H1 (cell line): ENCODE measurements at regions of chr3 and their contacts with region 1.

Region 1: GRCh38 chr3:49906004-49906743 is 2.5 kb upstream of the MST1R start:
- DNase-seq: peak in 1 of 2 experiments; percentile 77
- H3K4me3 ChIP-seq: peak overlapping the region in 1 of 4 experiments; percentile 10; a peak in 1 of 8 replicates
- H3K27ac ChIP-seq: no peak overlapping the region
- H3K4me1 ChIP-seq: peaks cover 2 to 43% (median 26%) of the 10 kb centered on the region in 4 experiments
- H3K27me3 ChIP-seq: peaks cover 0 to 20% (median 16%) of the 10 kb centered on the region in 4 experiments; a peak in 5 of 7 replicates
- CTCF ChIP-seq: peak in 2 of 3 experiments; percentile 89 to 90; a peak in 3 of 4 replicates
- EP300 ChIP-seq: no peak
- POLR2A ChIP-seq: no peak
- RAD21 ChIP-seq: peak; percentile 80 to 85

Region 2: GRCh38 chr3:49769286-49769915 is 136.8 kb before region 1 on chr3:
- CTCF ChIA-PET with region 1: no interaction called
- POLR2A ChIA-PET with region 1: no interaction called
- DNase-seq: no peak
- H3K4me3 ChIP-seq: no peak overlapping the region
- H3K27ac ChIP-seq: no peak overlapping the region
- H3K4me1 ChIP-seq: no peaks in the 10 kb centered on the region
- H3K27me3 ChIP-seq: no peaks in the 10 kb centered on the region
- CTCF ChIP-seq: no peak
- EP300 ChIP-seq: no peak
- POLR2A ChIP-seq: no peak
- RAD21 ChIP-seq: no peak

Region 3: GRCh38 chr3:49882166-49882565 is 24.0 kb before region 1 on chr3:
- CTCF ChIA-PET with region 1: interaction called, 38 read pairs
- POLR2A ChIA-PET with region 1: interaction called, 16 read pairs
- DNase-seq: no peak
- H3K4me3 ChIP-seq: no peak overlapping the region
- H3K27ac ChIP-seq: no peak overlapping the region
- H3K4me1 ChIP-seq: peaks cover 10 to 22% (median 17%) of the 10 kb centered on the region in 4 experiments
- H3K27me3 ChIP-seq: no peaks in the 10 kb centered on the region
- CTCF ChIP-seq: no peak
- EP300 ChIP-seq: no peak
- POLR2A ChIP-seq: no peak
- RAD21 ChIP-seq: no peak

Region 4: DNA sequence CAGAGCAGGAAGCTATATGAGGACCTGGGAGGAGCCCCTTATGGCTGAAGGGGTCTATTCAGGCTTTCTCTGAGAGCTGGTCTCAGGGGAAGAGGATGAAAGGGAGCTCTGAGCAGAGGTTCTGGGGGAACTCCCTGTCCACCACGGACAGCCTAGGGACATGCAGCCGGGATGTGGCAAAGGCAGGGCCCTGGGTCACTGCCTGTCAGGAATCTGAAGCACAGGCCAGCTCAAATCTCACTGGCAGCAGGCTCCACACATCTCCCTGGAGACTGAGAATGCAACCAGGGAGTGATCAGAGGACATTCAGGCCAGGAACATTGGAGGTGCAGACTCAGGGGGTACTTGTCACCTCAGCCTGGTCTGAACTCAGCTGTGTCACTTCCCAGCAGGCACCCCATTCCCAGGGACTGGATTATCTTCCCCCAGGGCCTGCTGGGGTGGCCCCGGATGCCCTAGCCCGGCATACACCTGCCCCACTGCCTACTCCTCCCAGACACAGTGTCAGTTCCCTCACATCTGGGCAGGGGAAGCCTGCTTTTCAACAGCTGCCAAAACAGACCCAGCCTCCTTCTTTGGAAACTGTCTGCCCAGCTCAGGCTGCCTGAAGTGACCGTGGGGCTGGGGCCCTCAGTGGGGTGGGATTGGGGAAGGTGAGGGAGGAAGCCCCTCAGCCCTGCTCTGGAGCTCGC is 230.7 kb after region 1 on chr3:
- CTCF ChIA-PET with region 1: no interaction called
- POLR2A ChIA-PET with region 1: no interaction called
- DNase-seq: no peak
- H3K4me3 ChIP-seq: no peak overlapping the region
- H3K27ac ChIP-seq: no peak overlapping the region; the same call in 1 of the 2 replicates
- H3K4me1 ChIP-seq: peaks cover 4 to 35% (median 28%) of the 10 kb centered on the region in 4 experiments
- H3K27me3 ChIP-seq: no peaks in the 10 kb centered on the region; a peak in 1 of 7 replicates
- CTCF ChIP-seq: no peak
- EP300 ChIP-seq: no peak
- POLR2A ChIP-seq: no peak
- RAD21 ChIP-seq: no peak